CD4-positive, alpha-beta T cell (primary cell): ENCODE measurements at regions of chr11 and their contacts with region 1.

Region 1: DNA sequence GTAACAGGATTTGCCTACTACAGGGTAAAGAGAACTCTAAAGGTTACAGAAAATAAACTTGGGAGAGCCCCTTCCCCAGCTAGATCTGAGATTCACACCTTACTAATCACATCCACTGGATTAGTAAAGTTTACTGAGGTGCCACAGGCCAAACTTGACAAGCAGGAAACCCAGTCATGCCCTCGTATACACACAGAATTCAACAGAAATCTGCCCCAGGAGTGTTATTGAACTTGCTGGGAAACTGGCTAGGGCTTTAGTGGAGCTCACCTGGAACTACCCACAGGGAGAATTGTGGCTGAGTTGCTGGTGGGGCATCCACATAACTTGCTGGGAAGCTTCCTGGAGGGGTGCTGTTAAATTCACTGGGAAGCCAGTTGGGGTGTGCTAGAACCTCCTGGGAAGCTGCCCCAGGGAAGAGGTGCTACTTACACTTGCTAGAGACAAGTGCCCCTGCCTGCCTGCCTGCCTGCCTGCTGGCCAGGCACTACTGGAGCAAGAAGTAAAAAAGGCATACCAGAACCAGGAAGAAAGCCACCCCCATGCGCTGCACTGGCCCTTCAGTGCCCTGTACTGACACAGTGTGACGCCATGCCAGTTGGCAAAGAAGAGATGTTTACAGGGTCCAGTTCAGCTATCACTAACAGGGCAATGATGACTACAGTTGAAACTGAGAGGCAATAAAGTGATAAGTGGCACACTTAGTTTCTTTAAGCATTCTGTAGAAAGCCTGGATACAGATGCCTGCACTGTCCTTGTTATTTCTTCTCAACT is 106.5 kb downstream of the ALX4 start:
- DNase-seq: no peak
- ATAC-seq: no peak
- H3K4me3 ChIP-seq: no peak overlapping the region
- H3K4me3 Mint-ChIP-seq: no peak overlapping the region
- H3K27ac ChIP-seq: no peak overlapping the region
- H3K27ac Mint-ChIP-seq: no peak overlapping the region
- H3K4me1 ChIP-seq: no peaks in the 10 kb centered on the region
- H3K4me1 Mint-ChIP-seq: no peaks in the 10 kb centered on the region
- H3K27me3 ChIP-seq: no peaks in the 10 kb centered on the region
- H3K27me3 Mint-ChIP-seq: no peaks in the 10 kb centered on the region
- CTCF ChIP-seq: no peak

Region 2: DNA sequence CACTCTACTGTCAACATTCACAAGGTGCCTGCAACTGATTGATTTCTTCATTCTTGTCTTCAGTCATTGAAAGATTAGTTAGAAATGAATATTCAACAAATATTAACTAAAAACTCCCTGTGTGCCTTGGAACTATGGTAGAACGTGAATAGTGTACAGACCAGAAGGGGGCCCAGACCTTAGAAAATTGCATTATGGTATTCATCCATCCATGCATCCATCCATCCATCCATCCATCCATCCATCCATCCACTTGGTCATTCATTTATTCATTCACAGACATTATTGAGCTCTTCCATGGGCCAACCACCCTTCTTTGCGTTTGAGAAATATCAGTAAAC is 165.8 kb before region 1 on chr11:
- CTCF ChIA-PET with region 1: no interaction called
- POLR2A ChIA-PET with region 1: no interaction called
- intact Hi-C with region 1: no loop called
- DNase-seq: no peak
- ATAC-seq: no peak
- H3K4me3 ChIP-seq: no peak overlapping the region
- H3K4me3 Mint-ChIP-seq: no peak overlapping the region
- H3K27ac ChIP-seq: no peak overlapping the region
- H3K27ac Mint-ChIP-seq: no peak overlapping the region
- H3K4me1 ChIP-seq: no peaks in the 10 kb centered on the region
- H3K4me1 Mint-ChIP-seq: no peaks in the 10 kb centered on the region
- H3K27me3 ChIP-seq: peaks cover 2 to 10% of the 10 kb centered on the region in 2 experiments
- H3K27me3 Mint-ChIP-seq: peaks cover 9% of the 10 kb centered on the region
- CTCF ChIP-seq: no peak

Region 3: GRCh38 chr11:44252999-44253602 is 49.6 kb after region 1 on chr11:
- CTCF ChIA-PET with region 1: no interaction called
- POLR2A ChIA-PET with region 1: no interaction called
- intact Hi-C with region 1: loop called in 1 of 2 experiments (anchors 2 kb)
- DNase-seq: no peak
- ATAC-seq: no peak
- H3K4me3 ChIP-seq: no peak overlapping the region
- H3K4me3 Mint-ChIP-seq: no peak overlapping the region
- H3K27ac ChIP-seq: no peak overlapping the region
- H3K27ac Mint-ChIP-seq: no peak overlapping the region
- H3K4me1 ChIP-seq: peaks cover 16% of the 10 kb centered on the region
- H3K4me1 Mint-ChIP-seq: peaks cover 6% of the 10 kb centered on the region
- H3K27me3 ChIP-seq: no peaks in the 10 kb centered on the region
- H3K27me3 Mint-ChIP-seq: no peaks in the 10 kb centered on the region
- CTCF ChIP-seq: no peak

Region 4: DNA sequence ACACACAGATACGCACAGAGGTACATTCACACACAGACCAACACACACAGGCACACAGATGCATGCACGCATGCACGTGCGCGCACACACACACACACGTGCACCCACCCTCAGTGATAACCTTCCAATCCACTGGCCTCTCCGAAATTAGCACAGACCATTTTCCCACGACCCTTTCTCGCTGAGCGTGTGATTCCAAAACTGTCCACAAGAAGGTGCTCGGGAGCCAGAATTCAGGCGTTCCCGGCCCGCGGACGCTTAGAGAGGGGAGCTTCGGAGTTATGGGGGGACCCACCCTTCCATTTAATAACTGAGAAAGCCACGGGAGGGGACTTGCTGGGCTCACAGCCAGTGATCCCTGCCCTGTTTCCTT is 1567.7 kb after region 1 on chr11:
- CTCF ChIA-PET with region 1: no interaction called
- POLR2A ChIA-PET with region 1: no interaction called
- intact Hi-C with region 1: no loop called
- DNase-seq: peak; percentile 40 to 82 (median 65)
- ATAC-seq: peak; percentile 67
- H3K4me3 ChIP-seq: peak overlapping the region; percentile 79
- H3K4me3 Mint-ChIP-seq: peak overlapping the region; percentile 90
- H3K27ac ChIP-seq: peak overlapping the region in 1 of 2 donors; percentile 41
- H3K27ac Mint-ChIP-seq: peak overlapping the region; percentile 61
- H3K4me1 ChIP-seq: peaks cover 29% of the 10 kb centered on the region
- H3K4me1 Mint-ChIP-seq: peaks cover 26% of the 10 kb centered on the region
- H3K27me3 ChIP-seq: peaks cover 0 to 4% of the 10 kb centered on the region in 2 experiments
- H3K27me3 Mint-ChIP-seq: no peaks in the 10 kb centered on the region
- CTCF ChIP-seq: peak; percentile 64